GM12878 (cell line): ENCODE measurements at regions of chr12 and their contacts with region 1.

Region 1: DNA sequence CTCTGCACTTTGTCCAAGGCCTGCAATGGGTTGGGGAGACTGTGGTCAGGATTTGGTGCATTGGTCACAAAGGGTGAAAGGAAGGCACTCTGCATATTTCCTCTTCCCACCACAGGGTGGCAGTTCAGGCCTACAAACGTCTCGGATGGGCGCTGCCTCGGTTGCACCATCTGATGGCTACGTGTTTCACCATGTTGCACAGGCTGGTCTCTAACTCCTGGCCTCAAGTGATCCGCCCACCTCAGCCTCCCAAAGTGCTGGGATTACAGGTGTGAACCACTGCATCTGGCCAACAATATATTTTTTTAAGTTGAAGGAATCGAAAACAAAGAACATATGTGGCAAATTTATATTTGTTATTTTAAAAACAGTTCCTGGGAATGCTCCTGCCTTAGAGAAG is 35.1 kb downstream of the TMBIM6 start:
- DNase-seq: no peak
- ATAC-seq: peak; percentile 95
- H3K4me3 ChIP-seq: no peak overlapping the region
- H3K27ac ChIP-seq: no peak overlapping the region
- H3K4me1 ChIP-seq: peaks cover 6% of the 10 kb centered on the region
- H3K27me3 ChIP-seq: no peaks in the 10 kb centered on the region
- CTCF ChIP-seq: peak; percentile 79 to 80 (median 79)
- EP300 ChIP-seq: no peak
- POLR2A ChIP-seq: no peak
- RAD21 ChIP-seq: peak; percentile 90

Region 2: GRCh38 chr12:49636979-49637755 is 139.2 kb before region 1 on chr12:
- CTCF ChIA-PET with region 1: interaction called, 11 read pairs
- POLR2A ChIA-PET with region 1: no interaction called
- RAD21 ChIA-PET with region 1: interaction called, 5 read pairs
- SMC1A ChIA-PET with region 1: interaction called, 5 read pairs
- in situ Hi-C with region 1: no loop called
- intact Hi-C with region 1: loop called (anchors 5 kb)
- DNase-seq: no peak
- ATAC-seq: peak; percentile 93
- H3K4me3 ChIP-seq: no peak overlapping the region
- H3K27ac ChIP-seq: no peak overlapping the region
- H3K4me1 ChIP-seq: peaks cover 3% of the 10 kb centered on the region; the same call in 1 of the 2 replicates
- H3K27me3 ChIP-seq: no peaks in the 10 kb centered on the region
- CTCF ChIP-seq: peak; percentile 73 to 77 (median 74)
- EP300 ChIP-seq: no peak
- POLR2A ChIP-seq: no peak; the same call in 1 of the 2 replicates
- RAD21 ChIP-seq: peak; percentile 84

Region 3: DNA sequence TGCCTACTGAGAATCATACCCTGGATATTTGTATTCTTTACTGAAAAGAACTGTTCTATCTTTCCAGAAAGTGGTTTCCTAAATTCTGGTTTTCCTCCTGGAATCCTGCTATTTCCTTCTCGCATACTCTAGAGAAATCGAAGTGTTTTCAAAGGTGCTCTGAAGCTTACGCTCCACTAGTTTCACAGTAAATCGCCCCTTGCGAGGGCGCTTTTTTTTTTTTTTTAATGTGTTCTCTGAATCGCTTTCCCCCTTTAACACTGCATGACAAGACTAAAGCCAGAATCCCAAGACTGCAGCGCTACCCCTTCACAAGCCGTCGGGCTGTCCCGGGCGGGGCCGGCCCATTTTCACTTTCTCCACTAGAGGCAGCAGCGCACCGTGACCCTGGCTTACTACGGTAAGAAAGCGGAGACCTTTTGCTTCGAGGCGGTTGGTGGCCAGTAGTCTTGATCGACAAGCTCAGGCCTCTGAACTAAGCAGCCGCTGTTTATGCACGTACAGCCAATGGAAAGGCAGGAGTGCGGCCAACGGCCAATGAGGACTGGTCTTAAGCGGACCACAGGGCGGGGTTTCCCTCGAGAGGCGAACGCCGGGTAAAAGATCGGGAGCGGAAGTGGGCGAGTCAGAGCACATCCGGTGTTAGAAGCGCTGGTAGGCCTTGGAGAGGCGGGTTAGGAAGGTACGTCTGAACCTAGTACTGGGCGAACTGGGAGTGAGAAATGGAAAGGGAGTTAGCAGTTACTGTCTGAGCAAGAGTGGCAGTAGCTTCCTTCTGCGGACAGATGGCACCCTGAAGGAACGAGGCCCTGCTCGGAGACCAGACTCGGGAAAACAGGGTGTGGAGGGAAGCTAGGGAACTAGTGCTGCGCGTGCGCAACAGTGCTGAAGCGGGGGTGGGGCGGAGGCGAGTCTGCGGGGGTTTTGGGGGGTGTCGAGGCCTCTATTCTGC is 35.2 kb before region 1 on chr12 and contains the start of gene TMBIM6:
- CTCF ChIA-PET with region 1: interaction called, 34 read pairs
- POLR2A ChIA-PET with region 1: interaction called, 4 read pairs
- RAD21 ChIA-PET with region 1: interaction called, 31 read pairs
- SMC1A ChIA-PET with region 1: interaction called, 12 read pairs
- in situ Hi-C with region 1: no loop called
- intact Hi-C with region 1: loop called (anchors 1 kb)
- DNase-seq: peak; percentile 99
- ATAC-seq: peak; percentile 96
- H3K4me3 ChIP-seq: peak within 1 kb of the TSS; percentile 77
- H3K27ac ChIP-seq: peak within 1 kb of the TSS; percentile 96
- H3K4me1 ChIP-seq: 0 out of 2 replicates have a peak, but pooled peaks cover 2% of the 10 kb centered on the region
- H3K27me3 ChIP-seq: no peaks in the 10 kb centered on the region
- CTCF ChIP-seq: peak; percentile 91 to 99 (median 98)
- EP300 ChIP-seq: no peak
- POLR2A ChIP-seq: peak; percentile 98
- RAD21 ChIP-seq: peak; percentile 80
- polyA plus RNA-seq, gene TMBIM6: 853 to 1,192 TPM

Region 4: DNA sequence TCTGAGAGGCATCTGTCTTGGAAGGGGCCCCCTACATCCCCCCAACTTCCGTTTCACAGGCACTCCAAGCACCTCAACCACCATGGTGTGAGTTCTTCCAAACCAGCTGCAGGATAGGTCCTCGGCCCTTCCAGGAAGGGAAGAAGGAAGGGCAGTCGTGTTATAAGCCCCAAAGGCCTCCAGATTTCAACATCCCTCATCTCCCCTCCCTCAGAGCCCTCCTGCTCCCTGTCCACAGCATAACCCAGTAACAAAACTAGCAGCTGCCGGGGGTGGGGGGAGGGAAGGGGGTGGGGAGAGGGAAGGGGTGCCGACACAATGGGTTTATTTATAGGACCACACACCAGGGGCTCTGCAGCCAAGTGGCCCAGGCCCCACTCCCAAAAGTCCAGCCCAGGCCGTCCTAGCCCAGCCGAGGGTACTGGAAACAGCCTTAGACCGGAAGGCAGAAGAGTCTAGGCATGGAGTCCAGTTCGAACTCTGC is 33.5 kb after region 1 on chr12:
- CTCF ChIA-PET with region 1: interaction called, 12 read pairs
- POLR2A ChIA-PET with region 1: interaction called, 3 read pairs
- RAD21 ChIA-PET with region 1: no interaction called
- SMC1A ChIA-PET with region 1: interaction called, 5 read pairs
- in situ Hi-C with region 1: no loop called
- intact Hi-C with region 1: no loop called
- DNase-seq: no peak
- ATAC-seq: no peak
- H3K4me3 ChIP-seq: no peak overlapping the region
- H3K27ac ChIP-seq: no peak overlapping the region
- H3K4me1 ChIP-seq: peaks cover 25% of the 10 kb centered on the region
- H3K27me3 ChIP-seq: no peaks in the 10 kb centered on the region
- CTCF ChIP-seq: no peak
- EP300 ChIP-seq: no peak
- POLR2A ChIP-seq: no peak
- RAD21 ChIP-seq: no peak

Region 5: GRCh38 chr12:49866859-49867579 is 90.6 kb after region 1 on chr12:
- CTCF ChIA-PET with region 1: interaction called, 18 read pairs
- POLR2A ChIA-PET with region 1: no interaction called
- RAD21 ChIA-PET with region 1: no interaction called
- SMC1A ChIA-PET with region 1: interaction called, 3 read pairs
- in situ Hi-C with region 1: no loop called
- intact Hi-C with region 1: no loop called
- DNase-seq: no peak
- ATAC-seq: peak; percentile 96
- H3K4me3 ChIP-seq: no peak overlapping the region
- H3K27ac ChIP-seq: no peak overlapping the region
- H3K4me1 ChIP-seq: no peaks in the 10 kb centered on the region
- H3K27me3 ChIP-seq: no peaks in the 10 kb centered on the region; a peak in 2 of 4 replicates
- CTCF ChIP-seq: peak; percentile 94 to 99 (median 99); a peak in 5 of 6 replicates
- EP300 ChIP-seq: no peak
- POLR2A ChIP-seq: no peak
- RAD21 ChIP-seq: peak; percentile 74

Region 6: GRCh38 chr12:49909826-49910225 is 133.4 kb after region 1 on chr12:
- CTCF ChIA-PET with region 1: no interaction called
- POLR2A ChIA-PET with region 1: no interaction called
- RAD21 ChIA-PET with region 1: no interaction called
- SMC1A ChIA-PET with region 1: no interaction called
- in situ Hi-C with region 1: no loop called
- intact Hi-C with region 1: no loop called
- DNase-seq: no peak
- ATAC-seq: no peak
- H3K4me3 ChIP-seq: no peak overlapping the region
- H3K27ac ChIP-seq: no peak overlapping the region
- H3K4me1 ChIP-seq: no peaks in the 10 kb centered on the region
- H3K27me3 ChIP-seq: peaks cover 2 to 3% of the 10 kb centered on the region in 2 experiments; a peak in 1 of 4 replicates
- CTCF ChIP-seq: no peak
- EP300 ChIP-seq: no peak
- POLR2A ChIP-seq: no peak
- RAD21 ChIP-seq: no peak

Region 7: DNA sequence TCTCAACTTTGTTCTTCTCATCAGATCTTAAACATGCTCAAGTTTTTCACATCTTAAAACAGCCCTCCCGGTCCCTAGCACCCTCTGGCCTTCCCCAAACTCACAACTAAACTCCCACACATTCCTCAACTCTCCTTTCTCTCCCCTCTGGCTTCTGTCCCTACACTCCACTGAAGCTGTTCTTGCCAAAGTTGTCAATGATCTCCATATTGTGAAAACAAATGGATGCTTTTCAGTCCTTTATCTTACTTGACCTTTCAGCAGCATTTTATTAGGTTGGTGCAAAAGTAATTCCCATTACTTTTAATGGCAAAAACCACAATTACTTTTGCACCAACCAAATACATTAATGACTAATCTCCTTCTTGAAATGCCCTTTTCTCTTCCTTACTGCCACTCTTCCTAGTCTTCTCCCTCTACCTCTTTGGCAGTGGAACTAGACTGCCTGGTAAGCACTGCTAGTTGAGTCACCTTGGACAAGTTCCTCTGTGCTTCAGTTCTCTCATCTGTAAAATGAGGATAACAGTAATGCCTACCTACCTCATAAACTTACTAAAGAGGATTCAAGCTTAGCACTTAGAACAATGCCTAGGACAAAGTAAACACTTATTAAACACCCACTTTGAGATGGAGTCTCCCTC is 374.8 kb after region 1 on chr12:
- CTCF ChIA-PET with region 1: no interaction called
- POLR2A ChIA-PET with region 1: no interaction called
- RAD21 ChIA-PET with region 1: no interaction called
- SMC1A ChIA-PET with region 1: no interaction called
- in situ Hi-C with region 1: no loop called
- intact Hi-C with region 1: no loop called
- DNase-seq: no peak
- ATAC-seq: no peak
- H3K4me3 ChIP-seq: no peak overlapping the region
- H3K27ac ChIP-seq: no peak overlapping the region
- H3K4me1 ChIP-seq: no peaks in the 10 kb centered on the region
- H3K27me3 ChIP-seq: no peaks in the 10 kb centered on the region
- CTCF ChIP-seq: no peak
- EP300 ChIP-seq: no peak
- POLR2A ChIP-seq: no peak
- RAD21 ChIP-seq: no peak